Natural killer cell (primary cell): ENCODE measurements at regions of chr10 and their contacts with region 1.

Region 1: DNA sequence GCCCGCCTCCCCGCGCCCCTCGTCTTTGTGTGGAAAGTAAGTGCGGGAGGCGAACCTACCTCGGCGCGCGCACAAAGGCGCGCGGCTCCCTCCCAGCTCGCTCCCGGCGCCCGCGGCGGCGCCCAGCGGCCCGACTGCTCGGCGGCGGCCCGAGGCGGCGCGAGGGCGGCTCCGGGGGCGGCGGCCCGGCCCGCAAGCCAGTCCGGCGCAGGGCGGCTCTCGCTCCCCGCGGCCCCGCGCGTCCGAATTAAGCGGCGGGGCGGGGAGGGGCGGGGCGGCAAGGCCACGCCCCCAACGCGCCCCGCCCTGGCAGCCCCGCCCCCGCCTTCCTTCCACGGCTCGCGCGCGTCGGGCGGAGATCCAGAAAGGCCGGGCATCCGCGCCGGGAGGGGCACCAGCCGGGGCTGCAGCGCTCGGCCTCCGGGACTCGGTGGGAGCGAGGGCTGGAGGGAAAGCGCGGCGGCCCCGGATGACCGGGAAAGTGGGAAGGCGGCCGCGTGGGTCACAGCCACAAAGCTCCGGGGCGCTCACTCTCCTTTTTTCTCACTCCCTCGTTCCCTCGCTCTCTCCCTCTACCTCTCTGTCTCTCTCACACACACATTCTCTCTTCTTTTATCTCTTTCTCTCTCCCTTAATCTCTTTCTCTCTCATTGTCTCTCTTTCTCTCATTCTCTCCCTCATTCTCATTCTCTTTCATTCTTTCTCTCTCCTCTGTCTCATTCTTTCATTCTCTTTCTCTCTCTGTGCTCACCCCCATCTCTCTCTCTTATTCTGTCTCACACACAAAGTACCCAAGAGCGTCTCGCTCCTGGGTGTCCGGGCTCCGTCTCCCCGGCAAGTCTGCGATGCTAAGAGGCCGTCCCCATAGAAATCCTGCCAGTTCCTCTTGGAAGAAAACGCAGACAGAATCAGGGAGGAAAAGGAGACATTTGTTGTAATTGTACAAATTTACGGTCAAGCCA is 170.2 kb downstream of the FAM107B start:
- DNase-seq: peak; percentile 72 to 86
- ATAC-seq: peak; percentile 81 to 92 (median 86)
- H3K4me3 ChIP-seq: peak overlapping the region; percentile 48
- H3K4me3 Mint-ChIP-seq: peak overlapping the region; percentile 90
- H3K27ac ChIP-seq: peak overlapping the region; percentile 50
- H3K27ac Mint-ChIP-seq: peak overlapping the region; percentile 57 to 88
- H3K4me1 ChIP-seq: peaks cover 27% of the 10 kb centered on the region
- H3K4me1 Mint-ChIP-seq: peaks cover 55% of the 10 kb centered on the region in 2 donors
- H3K27me3 ChIP-seq: no peaks in the 10 kb centered on the region
- H3K27me3 Mint-ChIP-seq: peaks cover 0 to 3% of the 10 kb centered on the region in 2 donors
- CTCF ChIP-seq: no peak

Region 2: DNA sequence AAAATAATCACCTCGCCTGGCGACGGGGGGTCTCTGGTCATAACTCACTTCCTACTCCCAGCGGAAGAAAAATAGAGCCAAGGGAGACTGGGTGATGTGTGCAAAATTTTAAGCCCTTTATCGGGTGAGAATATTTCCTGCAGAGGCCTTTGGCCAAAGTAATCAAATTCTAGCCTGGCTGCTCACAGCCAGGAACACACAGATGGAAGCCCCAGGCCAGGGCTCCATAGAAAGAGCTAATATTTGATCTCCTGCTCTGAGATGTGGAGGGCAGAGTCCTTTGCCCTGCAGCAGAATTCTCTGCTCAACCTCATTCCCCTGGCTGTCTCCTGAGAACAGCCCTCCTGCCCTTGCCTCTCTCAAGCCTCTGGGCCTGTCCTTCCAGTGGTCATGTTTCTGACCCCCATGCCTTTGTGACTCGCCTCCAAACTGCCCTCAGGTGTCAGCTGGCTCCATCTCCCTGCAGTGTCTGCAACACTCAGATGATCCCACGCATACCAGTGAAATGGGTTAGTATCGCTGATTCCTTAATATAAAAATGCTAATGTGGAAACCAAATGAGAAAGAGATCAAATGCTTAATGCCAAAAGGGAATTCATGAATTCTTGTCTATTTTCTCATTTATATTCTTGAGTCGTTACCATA is 308.3 kb before region 1 on chr10:
- intact Hi-C with region 1: no loop called
- DNase-seq: no peak
- ATAC-seq: no peak
- H3K4me3 ChIP-seq: no peak overlapping the region
- H3K4me3 Mint-ChIP-seq: no peak overlapping the region
- H3K27ac ChIP-seq: no peak overlapping the region
- H3K27ac Mint-ChIP-seq: no peak overlapping the region
- H3K4me1 ChIP-seq: no peaks in the 10 kb centered on the region
- H3K4me1 Mint-ChIP-seq: no peaks in the 10 kb centered on the region
- H3K27me3 ChIP-seq: no peaks in the 10 kb centered on the region
- H3K27me3 Mint-ChIP-seq: peaks cover 13 to 14% of the 10 kb centered on the region in 2 donors
- CTCF ChIP-seq: no peak

Region 3: DNA sequence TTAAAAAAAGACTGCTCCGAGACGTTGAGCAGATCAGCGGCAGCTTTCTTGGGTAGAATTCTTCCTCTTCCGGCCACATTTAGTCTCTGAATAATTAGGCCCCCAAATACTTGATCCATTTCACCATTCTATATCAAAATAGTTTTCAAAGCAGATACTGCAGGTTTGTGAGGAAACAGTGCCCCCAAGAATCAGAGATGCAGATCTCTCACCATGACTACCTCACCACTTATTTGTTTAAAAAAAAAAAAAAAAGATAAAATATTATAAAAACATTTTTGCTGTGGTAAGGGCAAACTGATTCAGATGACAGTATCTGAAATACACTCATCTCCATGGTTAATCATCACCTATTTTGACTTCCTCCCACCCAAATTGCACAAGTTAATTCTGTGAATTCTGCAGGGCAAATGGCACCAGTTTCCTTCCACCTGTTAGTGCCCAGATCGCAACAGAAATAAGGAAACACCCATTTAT is 40.2 kb before region 1 on chr10:
- intact Hi-C with region 1: loop called (anchors 1 kb)
- DNase-seq: peak in 1 of 2 donors; percentile 77
- ATAC-seq: peak; percentile 35 to 51 (median 50)
- H3K4me3 ChIP-seq: no peak overlapping the region
- H3K4me3 Mint-ChIP-seq: peak overlapping the region; percentile 90
- H3K27ac ChIP-seq: peak overlapping the region; percentile 87
- H3K27ac Mint-ChIP-seq: peak overlapping the region; percentile 95 to 98
- H3K4me1 ChIP-seq: peaks cover 74% of the 10 kb centered on the region
- H3K4me1 Mint-ChIP-seq: peaks cover 95 to 96% of the 10 kb centered on the region in 2 donors
- H3K27me3 ChIP-seq: no peaks in the 10 kb centered on the region
- H3K27me3 Mint-ChIP-seq: no peaks in the 10 kb centered on the region
- CTCF ChIP-seq: no peak

Region 4: GRCh38 chr10:14635043-14635710 is 30.7 kb after region 1 on chr10:
- intact Hi-C with region 1: no loop called
- DNase-seq: no peak
- ATAC-seq: no peak
- H3K4me3 ChIP-seq: no peak overlapping the region
- H3K4me3 Mint-ChIP-seq: no peak overlapping the region
- H3K27ac ChIP-seq: no peak overlapping the region
- H3K27ac Mint-ChIP-seq: no peak overlapping the region
- H3K4me1 ChIP-seq: no peaks in the 10 kb centered on the region
- H3K4me1 Mint-ChIP-seq: no peaks in the 10 kb centered on the region
- H3K27me3 ChIP-seq: no peaks in the 10 kb centered on the region
- H3K27me3 Mint-ChIP-seq: peaks cover 0 to 3% of the 10 kb centered on the region in 2 donors
- CTCF ChIP-seq: no peak

Region 5: GRCh38 chr10:14648005-14648765 is 43.7 kb after region 1 on chr10:
- intact Hi-C with region 1: loop called (anchors 5 kb)
- DNase-seq: peak; percentile 57 to 90
- ATAC-seq: peak; percentile 85 to 90 (median 87)
- H3K4me3 ChIP-seq: peak overlapping the region; percentile 6
- H3K4me3 Mint-ChIP-seq: peak overlapping the region; percentile 76
- H3K27ac ChIP-seq: peak overlapping the region; percentile 96
- H3K27ac Mint-ChIP-seq: peak overlapping the region; percentile 94 to 96
- H3K4me1 ChIP-seq: peaks cover 29% of the 10 kb centered on the region
- H3K4me1 Mint-ChIP-seq: peaks cover 24 to 27% of the 10 kb centered on the region in 2 donors
- H3K27me3 ChIP-seq: no peaks in the 10 kb centered on the region
- H3K27me3 Mint-ChIP-seq: no peaks in the 10 kb centered on the region
- CTCF ChIP-seq: no peak

Region 6: GRCh38 chr10:15097011-15097812 is 492.8 kb after region 1 on chr10 and contains the start of gene RPP38:
- intact Hi-C with region 1: no loop called
- DNase-seq: peak; percentile 94 to 97
- ATAC-seq: peak; percentile 81 to 90 (median 82)
- H3K4me3 ChIP-seq: peak within 1 kb of the TSS; percentile 74
- H3K4me3 Mint-ChIP-seq: peak within 1 kb of the TSS; percentile 95
- H3K27ac ChIP-seq: peak within 1 kb of the TSS; percentile 94
- H3K27ac Mint-ChIP-seq: peak within 1 kb of the TSS; percentile 97 to 98
- H3K4me1 ChIP-seq: peaks cover 27% of the 10 kb centered on the region
- H3K4me1 Mint-ChIP-seq: peaks cover 27 to 41% of the 10 kb centered on the region in 2 donors
- H3K27me3 ChIP-seq: no peaks in the 10 kb centered on the region
- H3K27me3 Mint-ChIP-seq: no peaks in the 10 kb centered on the region
- CTCF ChIP-seq: no peak
- total RNA-seq, gene RPP38: 7.5 to 12.7 (median 8.4) TPM